Gastrocnemius medialis (tissue), 4 donors: ENCODE measurements at regions of chr10 and their contacts with region 1.

Region 1: GRCh38 chr10:131874991-131875451 is 25.8 kb upstream of the PPP2R2D start:
- DNase-seq: peak; percentile 35 to 46
- ATAC-seq: peak in 1 of 2 donors; percentile 46
- H3K4me3 ChIP-seq: no peak overlapping the region
- H3K27ac ChIP-seq: no peak overlapping the region
- H3K4me1 ChIP-seq: peaks cover 0 to 5% of the 10 kb centered on the region in 2 donors
- H3K27me3 ChIP-seq: peaks cover 7 to 30% (median 8%) of the 10 kb centered on the region in 3 donors
- CTCF ChIP-seq: peak in 4 of 5 experiments; percentile 41 to 62 (median 56)
- POLR2A ChIP-seq: no peak

Region 2: GRCh38 chr10:130190055-130190736 is 1684.8 kb before region 1 on chr10:
- in situ Hi-C with region 1: loop called in 2 of 4 experiments (anchors 25 kb)
- intact Hi-C with region 1: no loop called
- DNase-seq: peak; percentile 62 to 75
- ATAC-seq: peak; percentile 83 to 93
- H3K4me3 ChIP-seq: peak overlapping the region; percentile 51 to 70 (median 57)
- H3K27ac ChIP-seq: no peak overlapping the region
- H3K4me1 ChIP-seq: peaks cover 0 to 8% of the 10 kb centered on the region in 2 donors
- H3K27me3 ChIP-seq: no peaks in the 10 kb centered on the region
- CTCF ChIP-seq: peak; percentile 92 to 100 (median 99)
- POLR2A ChIP-seq: no peak